Head of caudate nucleus (tissue), 42 donors: ENCODE measurements at regions of chr5 and their contacts with region 1.

Region 1: GRCh38 chr5:142881076-142881783 is 111.1 kb downstream of the ARHGAP26 start:
- DNase-seq: peak in 29 of 42 donors; percentile 19 to 84 (median 45)

Region 2: DNA sequence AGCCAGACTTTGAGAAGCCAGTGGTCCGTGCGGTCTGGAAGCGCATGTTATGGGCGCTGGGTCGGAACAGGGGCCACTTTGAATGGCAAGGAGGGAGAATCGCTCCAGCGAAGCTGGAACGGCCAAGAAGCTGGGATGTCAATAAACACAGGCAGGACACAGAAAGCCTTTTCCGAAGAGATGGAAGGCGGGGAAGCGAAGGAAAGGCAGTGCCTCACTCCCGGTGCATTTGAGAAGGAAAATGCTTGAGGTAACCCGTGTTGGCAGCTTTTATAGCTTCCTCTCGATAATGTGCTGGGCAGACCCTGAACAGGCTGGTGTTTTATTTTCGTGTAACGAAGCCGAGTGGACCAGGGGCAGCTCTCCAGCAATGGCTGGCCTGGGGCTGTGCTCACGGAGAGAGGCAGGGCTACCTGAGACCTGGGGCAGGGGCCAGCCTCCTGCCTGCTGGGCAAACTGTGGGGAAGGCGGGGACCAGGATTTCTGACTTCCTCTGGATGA is 472.2 kb before region 1 on chr5:
- intact Hi-C with region 1: no loop called
- DNase-seq: no peak

Region 3: DNA sequence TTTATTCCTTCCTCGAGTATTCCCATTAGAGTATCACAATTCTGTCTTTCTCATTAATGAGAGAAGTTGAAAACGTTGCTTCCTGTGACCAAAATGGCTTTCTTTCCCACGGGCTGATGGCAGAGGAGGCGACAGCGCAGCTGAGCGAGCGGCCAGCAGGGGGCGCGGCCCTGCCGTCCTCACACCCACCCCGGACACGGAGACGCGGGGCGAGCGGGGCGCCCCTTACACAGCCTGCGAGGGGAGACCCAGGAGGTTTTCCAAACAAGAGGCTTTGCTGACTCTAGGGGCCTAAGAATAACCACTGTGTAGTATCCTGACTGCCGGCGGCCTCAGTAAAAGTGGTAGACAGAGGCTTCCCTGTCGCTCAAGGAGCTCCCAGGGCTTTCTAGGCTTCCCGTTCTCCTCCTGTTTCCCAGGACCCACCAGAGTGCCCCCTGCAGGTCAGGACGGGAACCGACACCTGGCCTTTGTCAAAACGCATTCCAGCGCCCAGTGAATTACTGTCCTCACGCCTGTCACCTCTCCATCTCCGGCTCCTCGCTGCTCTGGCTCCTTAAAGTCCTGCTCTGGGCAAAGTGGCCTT is 168.0 kb before region 1 on chr5:
- intact Hi-C with region 1: loop called (anchors 2 kb)
- DNase-seq: peak; percentile 79 to 94 (median 88)

Region 4: DNA sequence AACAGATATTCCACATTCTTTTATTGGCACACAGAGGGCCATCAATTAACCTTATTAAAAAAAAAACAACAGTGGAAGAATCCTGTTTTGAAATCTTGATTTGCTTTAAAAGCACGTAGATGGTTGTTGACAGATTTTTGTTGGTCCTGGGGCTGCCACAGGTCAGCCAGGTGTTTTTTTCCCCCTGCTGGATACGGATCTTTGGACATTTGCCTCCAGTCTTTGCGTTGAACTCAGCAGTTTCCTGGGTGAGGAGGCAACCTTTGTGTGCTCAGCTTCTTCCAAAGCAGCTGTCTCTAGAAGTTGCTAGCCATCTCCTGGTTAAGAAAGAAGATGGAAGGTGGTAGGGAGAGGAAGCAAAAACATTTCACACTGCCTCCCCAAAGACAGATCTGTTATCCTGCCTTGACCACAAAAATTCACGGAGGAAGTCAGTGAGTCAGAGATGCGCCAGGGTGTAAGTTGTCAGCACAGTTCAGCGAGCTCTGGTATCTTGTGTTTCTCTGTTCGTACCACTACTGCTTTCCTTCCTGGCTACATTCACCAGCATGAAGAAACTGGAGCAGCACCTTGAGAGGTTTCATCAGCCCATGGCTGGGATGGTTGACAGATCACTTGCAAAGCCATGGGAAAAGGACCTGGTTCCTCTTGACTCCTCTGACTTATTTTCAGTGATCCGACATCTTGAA is 96.3 kb after region 1 on chr5:
- intact Hi-C with region 1: no loop called
- DNase-seq: no peak